Ovary (tissue), 10 donors: ENCODE measurements at regions of chr7 and their contacts with region 1.

Region 1: GRCh38 chr7:159030490-159031134 is 114.1 kb downstream of the VIPR2 start:
- DNase-seq: peak; percentile 80 to 85 (median 82)
- H3K4me3 ChIP-seq: peak overlapping the region; percentile 41
- H3K27ac ChIP-seq: peak overlapping the region; percentile 68 to 91
- H3K4me1 ChIP-seq: peaks cover 11% of the 10 kb centered on the region
- H3K27me3 ChIP-seq: no peaks in the 10 kb centered on the region
- CTCF ChIP-seq: peak; percentile 23 to 86 (median 76)
- EP300 ChIP-seq: no peak
- POLR2A ChIP-seq: peak; percentile 37

Region 2: DNA sequence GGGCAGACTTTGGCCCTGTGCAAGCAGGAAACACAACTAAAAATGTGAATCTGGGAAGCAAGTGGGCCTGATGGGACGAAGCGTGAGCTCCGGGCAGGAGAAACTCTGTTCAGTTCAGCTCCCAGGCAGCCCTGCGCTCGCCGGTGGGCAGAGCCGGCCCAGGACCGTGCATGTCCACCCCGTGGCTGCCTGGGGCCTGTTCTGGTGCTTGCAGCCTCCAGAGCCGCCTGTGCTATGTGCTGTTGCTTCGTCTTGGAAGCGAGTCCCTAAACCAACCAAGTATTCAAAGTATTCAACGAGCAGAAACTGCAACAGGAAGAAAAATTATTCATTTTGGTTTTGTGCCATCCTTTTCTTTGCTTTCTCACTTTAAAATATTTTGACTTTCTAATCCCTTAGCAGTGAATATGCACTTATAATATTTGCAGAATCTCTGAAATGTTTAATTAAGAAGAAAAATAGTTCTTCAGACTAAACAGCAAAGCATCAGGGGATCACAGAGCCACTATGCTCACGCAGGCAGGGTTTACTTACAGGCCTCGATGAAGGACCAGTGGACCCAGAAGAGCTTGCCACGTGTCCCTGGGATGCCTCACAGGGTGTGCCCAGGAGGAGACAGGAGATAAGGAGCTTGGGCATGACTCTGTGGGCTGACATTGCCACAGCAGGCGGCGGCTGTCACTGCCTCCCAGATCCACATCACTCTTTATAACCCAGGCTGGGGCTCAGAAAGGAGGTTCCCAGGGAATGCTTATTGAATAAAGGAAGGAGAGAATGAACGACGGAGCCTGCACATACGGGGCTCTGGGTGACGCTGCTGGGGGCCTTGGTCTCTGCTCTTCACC is 68.4 kb after region 1 on chr7:
- intact Hi-C with region 1: loop called in 1 of 4 experiments (anchors 10 kb)
- DNase-seq: peak; percentile 63 to 80 (median 67)
- H3K4me3 ChIP-seq: no peak overlapping the region
- H3K27ac ChIP-seq: peak overlapping the region; percentile 65 to 66
- H3K4me1 ChIP-seq: peaks cover 14% of the 10 kb centered on the region
- H3K27me3 ChIP-seq: no peaks in the 10 kb centered on the region
- CTCF ChIP-seq: no peak
- EP300 ChIP-seq: no peak
- POLR2A ChIP-seq: no peak

Region 3: DNA sequence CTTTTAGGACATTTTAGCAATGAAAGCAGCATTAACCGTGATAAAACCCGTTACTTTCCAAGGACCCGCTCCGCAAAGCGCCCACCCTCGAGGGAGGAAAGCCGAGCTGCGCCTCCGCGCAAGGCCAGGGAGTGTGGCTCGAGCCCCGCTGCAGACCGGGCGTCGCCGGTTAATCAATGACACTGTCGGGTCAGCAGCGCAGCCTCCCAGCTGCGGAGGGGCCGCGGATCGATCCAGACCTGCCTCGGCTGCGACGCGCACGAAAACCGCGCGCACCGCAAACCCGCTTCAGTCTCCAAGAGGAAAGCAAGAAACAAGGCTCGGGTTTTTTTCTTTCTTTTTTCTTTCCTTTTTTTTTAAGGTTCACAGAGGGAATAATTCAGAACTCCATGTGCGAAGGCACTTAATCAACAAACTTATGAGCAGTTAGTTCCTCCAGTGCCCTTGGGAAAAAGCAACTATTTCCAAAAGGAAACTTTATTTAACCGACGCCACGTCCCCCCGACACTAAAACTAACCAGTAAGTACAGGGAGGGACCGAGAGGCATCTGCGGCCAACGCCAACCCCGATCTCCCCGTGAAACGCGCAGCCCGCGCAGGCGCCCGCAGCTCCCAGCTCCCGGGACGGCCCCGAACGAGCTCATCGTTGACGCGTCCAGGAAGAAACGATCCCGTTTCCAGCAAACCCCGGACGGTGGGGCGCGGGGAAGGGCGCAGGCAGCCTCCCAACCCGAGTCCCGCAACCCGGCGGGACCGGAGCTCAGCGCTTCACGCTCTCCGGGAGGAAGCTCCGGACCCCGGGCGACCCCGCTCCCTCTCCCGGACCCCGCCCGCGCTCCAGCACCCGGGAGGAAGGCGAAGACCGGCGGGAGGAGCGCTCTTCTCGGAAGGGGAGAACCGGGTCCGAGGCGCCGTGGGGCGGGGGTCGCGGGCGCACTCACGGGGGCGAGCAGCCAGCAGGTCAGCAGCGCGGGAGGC is 113.5 kb after region 1 on chr7:
- intact Hi-C with region 1: loop called in 1 of 4 experiments (anchors 10 kb)
- DNase-seq: peak; percentile 48 to 73 (median 64)
- H3K4me3 ChIP-seq: peak overlapping the region; percentile 57
- H3K27ac ChIP-seq: peak overlapping the region; percentile 80 to 88
- H3K4me1 ChIP-seq: peaks cover 4% of the 10 kb centered on the region
- H3K27me3 ChIP-seq: no peaks in the 10 kb centered on the region
- CTCF ChIP-seq: no peak
- EP300 ChIP-seq: no peak
- POLR2A ChIP-seq: no peak